MCF 10A (cell line): ENCODE measurements at regions of chr13 and their contacts with region 1.

Region 1: DNA sequence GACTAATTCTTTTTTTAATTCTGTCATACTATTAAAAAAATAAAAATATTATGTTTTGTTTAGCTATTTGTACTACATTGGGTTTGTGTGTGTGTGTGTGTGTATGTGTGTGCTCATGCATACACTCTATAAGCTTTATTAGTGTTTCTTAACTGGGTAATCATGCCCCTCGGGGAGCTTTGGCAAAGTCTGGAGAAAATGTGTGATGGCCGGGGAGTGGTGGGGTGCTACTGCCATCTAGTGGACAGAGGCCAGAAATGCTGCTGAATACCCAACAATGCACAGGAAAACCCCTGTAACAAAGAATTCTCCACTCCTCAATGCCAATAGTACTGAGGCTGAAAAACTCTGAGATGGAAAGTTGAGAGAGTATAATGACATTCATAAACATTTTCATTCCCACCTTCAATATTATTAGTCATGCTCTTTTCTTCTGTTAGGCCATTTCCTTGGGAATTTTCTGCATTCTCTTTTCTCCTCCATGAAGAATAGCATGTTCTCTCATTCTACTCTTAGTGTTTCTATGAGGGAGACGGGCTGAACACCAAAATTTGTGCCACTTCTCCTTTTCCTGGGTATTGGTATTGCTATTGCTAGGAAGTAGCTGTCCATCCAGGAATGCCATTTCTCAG is 157.3 kb downstream of the DNAJC3 start:
- DNase-seq: peak; percentile 93
- H3K4me3 Mint-ChIP-seq: no peak overlapping the region
- H3K27ac Mint-ChIP-seq: peak overlapping the region; percentile 42
- H3K4me1 Mint-ChIP-seq: peaks cover 19% of the 10 kb centered on the region
- H3K27me3 Mint-ChIP-seq: no peaks in the 10 kb centered on the region
- CTCF ChIP-seq: peak; percentile 97

Region 2: GRCh38 chr13:95494082-95494681 is 340.1 kb before region 1 on chr13:
- CTCF ChIA-PET with region 1: interaction called, 27 read pairs
- POLR2A ChIA-PET with region 1: interaction called, 3 read pairs
- intact Hi-C with region 1: loop called (anchors 1 kb)
- DNase-seq: peak; percentile 93
- H3K4me3 Mint-ChIP-seq: no peak overlapping the region
- H3K27ac Mint-ChIP-seq: no peak overlapping the region
- H3K4me1 Mint-ChIP-seq: peaks cover 6% of the 10 kb centered on the region
- H3K27me3 Mint-ChIP-seq: no peaks in the 10 kb centered on the region
- CTCF ChIP-seq: peak; percentile 71

Region 3: DNA sequence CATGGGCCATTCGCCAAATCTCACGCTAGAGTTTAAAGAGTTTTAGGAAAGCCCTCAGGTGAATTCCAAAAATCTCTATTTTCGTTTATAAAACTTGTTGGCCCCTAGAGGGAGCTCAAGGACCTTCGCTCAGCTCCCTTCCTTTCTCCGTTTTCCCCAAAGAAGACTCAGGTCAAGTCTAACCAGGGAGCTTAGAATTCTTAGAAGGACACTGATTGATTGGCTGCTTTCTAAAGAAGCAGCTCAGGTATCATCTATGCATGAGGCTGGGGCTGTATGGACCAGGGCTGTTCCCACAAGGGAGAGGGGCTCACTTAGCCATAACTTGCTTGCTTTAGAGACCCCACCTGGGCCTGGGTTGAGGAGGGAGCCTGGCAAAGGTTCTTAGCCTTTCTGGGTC is 210.2 kb before region 1 on chr13:
- CTCF ChIA-PET with region 1: interaction called, 265 read pairs
- POLR2A ChIA-PET with region 1: interaction called, 17 read pairs
- intact Hi-C with region 1: loop called (anchors 1 kb)
- DNase-seq: peak; percentile 81
- H3K4me3 Mint-ChIP-seq: no peak overlapping the region
- H3K27ac Mint-ChIP-seq: no peak overlapping the region
- H3K4me1 Mint-ChIP-seq: no peaks in the 10 kb centered on the region
- H3K27me3 Mint-ChIP-seq: no peaks in the 10 kb centered on the region
- CTCF ChIP-seq: peak; percentile 73

Region 4: DNA sequence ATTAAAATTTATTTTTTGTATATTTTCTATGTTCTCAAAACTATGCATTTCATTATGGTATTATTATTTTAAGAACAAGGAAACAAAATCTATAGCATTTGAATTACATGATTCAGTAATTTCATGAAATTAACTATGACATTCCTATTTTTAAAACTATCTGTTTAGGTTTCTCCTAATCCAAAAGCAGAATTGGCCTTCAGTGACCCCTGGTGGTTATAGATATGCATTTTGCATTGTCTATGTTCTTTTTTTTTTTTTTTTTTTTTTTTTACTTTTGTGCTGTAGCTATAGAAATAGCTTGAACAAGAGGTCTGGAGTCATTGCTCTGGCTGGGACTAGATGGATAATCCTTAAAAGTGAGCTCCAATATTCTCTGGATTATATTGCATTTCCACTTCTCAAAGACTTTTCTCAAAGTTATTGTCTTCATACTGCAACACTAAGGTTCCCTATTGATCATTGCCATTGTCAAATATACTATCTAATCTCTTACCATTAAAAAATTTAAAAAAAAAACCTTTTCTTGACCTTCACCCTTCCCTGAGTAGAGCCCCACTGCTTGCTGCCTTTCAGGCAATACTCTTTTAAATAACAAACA is 173.2 kb before region 1 on chr13:
- CTCF ChIA-PET with region 1: interaction called, 26 read pairs
- POLR2A ChIA-PET with region 1: no interaction called
- intact Hi-C with region 1: loop called (anchors 1 kb)
- DNase-seq: peak; percentile 88
- H3K4me3 Mint-ChIP-seq: no peak overlapping the region
- H3K27ac Mint-ChIP-seq: no peak overlapping the region
- H3K4me1 Mint-ChIP-seq: no peaks in the 10 kb centered on the region
- H3K27me3 Mint-ChIP-seq: no peaks in the 10 kb centered on the region
- CTCF ChIP-seq: peak; percentile 59

Region 5: GRCh38 chr13:95763601-95764000 is 70.6 kb before region 1 on chr13:
- CTCF ChIA-PET with region 1: interaction called, 11 read pairs
- POLR2A ChIA-PET with region 1: interaction called, 3 read pairs
- intact Hi-C with region 1: no loop called
- DNase-seq: no peak
- H3K4me3 Mint-ChIP-seq: no peak overlapping the region
- H3K27ac Mint-ChIP-seq: no peak overlapping the region
- H3K4me1 Mint-ChIP-seq: no peaks in the 10 kb centered on the region
- H3K27me3 Mint-ChIP-seq: no peaks in the 10 kb centered on the region
- CTCF ChIP-seq: no peak

Region 6: GRCh38 chr13:95822303-95822702 is 11.9 kb before region 1 on chr13:
- CTCF ChIA-PET with region 1: interaction called, 59 read pairs
- POLR2A ChIA-PET with region 1: interaction called, 5 read pairs
- intact Hi-C with region 1: no loop called
- DNase-seq: no peak
- H3K4me3 Mint-ChIP-seq: no peak overlapping the region
- H3K27ac Mint-ChIP-seq: no peak overlapping the region
- H3K4me1 Mint-ChIP-seq: no peaks in the 10 kb centered on the region
- H3K27me3 Mint-ChIP-seq: no peaks in the 10 kb centered on the region
- CTCF ChIP-seq: no peak

Region 7: DNA sequence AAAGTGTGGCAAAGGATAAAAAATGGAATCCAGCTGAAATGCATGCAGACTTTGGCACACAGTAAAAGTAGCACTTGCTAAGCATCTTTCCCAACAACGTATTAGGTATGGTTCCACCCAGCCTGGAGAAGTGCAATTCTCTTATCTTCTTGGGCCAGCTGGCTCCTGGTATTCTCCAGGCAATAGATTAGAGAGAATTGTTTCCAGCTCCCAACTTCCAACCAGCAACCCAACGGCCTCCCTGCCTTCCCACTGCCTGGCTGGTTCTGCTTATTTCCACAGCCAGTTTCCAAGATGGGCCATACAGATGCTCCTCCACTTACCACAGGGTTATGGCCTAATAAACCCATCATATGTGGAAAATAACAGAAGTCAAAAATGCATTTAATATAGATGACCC is 1026.6 kb after region 1 on chr13:
- CTCF ChIA-PET with region 1: no interaction called
- POLR2A ChIA-PET with region 1: no interaction called
- intact Hi-C with region 1: no loop called
- DNase-seq: no peak
- H3K4me3 Mint-ChIP-seq: no peak overlapping the region
- H3K27ac Mint-ChIP-seq: no peak overlapping the region
- H3K4me1 Mint-ChIP-seq: no peaks in the 10 kb centered on the region
- H3K27me3 Mint-ChIP-seq: no peaks in the 10 kb centered on the region
- CTCF ChIP-seq: no peak